Heart right ventricle (tissue), 16 donors: ENCODE measurements at regions of chr5 and their contacts with region 1.

Region 1: DNA sequence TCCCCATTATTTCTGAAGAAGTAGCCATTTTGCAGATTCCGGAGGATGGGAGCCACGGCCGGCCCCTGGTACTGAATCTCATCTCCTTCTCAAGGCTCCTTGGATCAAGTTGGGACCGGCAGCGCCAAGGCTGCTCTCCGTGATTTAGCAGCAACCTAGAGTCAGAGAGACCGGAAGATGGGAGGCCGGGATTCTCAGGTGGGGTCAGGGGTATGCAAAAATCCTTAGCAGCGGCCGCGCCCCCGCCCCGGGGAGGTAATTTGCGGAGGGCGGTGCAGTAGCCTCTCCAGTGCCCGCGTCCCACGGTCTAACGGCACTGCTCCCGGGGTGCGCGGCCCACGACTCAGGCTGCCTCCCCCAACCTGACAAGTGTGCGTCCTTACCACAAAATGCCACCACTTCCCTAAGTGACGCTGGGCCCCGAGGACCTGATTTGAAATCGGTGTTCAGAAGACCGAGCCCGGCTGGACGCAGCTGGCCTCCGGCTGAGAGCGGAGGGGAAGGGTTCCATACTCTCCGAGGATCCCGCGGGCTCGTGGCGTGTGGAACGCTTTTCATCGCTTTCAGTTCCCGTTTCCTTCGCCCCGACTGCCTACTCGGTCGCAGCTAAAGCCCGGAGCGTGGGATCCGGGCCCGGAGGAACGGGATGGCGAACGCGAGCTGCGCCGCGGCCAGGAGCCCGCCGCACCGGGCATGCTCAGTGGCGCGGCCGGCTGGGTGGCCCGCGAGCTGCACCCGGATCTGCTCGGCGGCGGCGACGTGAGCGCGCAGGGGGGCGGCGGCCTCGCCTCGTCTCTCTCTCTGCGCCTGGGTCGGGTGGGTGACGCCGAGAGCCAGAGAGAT is at the start of gene SCAMP1:
- DNase-seq: peak; percentile 91 to 95
- ATAC-seq: peak; percentile 97 to 99 (median 98)
- H3K4me3 ChIP-seq: peak within 1 kb of the TSS; percentile 66 to 100 (median 95)
- H3K27ac ChIP-seq: peak within 1 kb of the TSS; percentile 68 to 97 (median 91)
- H3K4me1 ChIP-seq: peaks cover 3 to 32% (median 24%) of the 10 kb centered on the region in 9 donors
- H3K27me3 ChIP-seq: no peaks in the 10 kb centered on the region
- CTCF ChIP-seq: peak; percentile 25 to 70 (median 57)
- total RNA-seq, gene SCAMP1: 26.2 to 40.4 (median 33.8) TPM

Region 2: DNA sequence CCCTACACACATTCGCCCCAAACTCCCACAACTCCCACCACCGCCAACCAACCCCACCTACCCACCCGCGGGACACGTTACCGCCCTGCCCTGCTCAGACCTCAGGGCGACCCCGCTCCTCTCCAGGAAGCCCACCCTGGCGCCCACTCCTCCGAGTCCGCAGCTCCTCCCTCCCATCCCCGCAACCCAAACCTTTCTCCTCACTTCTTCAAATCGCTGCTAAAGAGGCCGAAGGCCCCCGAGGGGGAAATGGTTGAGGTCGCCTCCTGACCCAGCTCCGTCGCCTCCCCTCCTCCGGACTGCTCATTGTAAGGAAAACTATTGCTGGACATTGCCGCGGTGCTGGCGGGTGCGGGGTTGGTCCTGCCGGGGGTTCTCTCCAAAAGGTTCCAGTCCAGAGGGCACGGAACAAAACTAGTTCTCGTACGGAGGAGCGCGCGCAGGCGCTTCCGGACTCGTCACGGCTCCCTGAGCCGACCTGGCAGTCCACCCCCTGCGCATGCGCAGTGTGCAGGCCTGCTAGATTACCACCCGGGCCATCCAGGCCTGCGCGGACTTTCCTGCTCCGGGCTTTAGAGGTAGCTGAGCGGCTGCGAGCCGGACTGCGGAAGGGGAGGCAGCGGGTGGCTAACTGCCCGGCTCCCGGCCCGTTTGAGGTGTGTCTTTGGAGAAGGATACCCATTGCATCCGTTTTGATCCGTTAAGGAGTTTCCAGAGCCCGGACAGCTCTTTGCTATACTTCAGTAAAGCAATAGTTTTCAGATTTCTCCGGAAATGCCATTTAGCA is 65.6 kb before region 1 on chr5 and contains the start of gene AP3B1:
- intact Hi-C with region 1: loop called in 9 of 10 experiments (anchors 1 to 5 kb)
- DNase-seq: peak; percentile 98 to 100
- ATAC-seq: peak; percentile 97 to 99 (median 98)
- H3K4me3 ChIP-seq: peak within 1 kb of the TSS; percentile 58 to 97 (median 82)
- H3K27ac ChIP-seq: peak within 1 kb of the TSS; percentile 36 to 94 (median 88)
- H3K4me1 ChIP-seq: peaks cover 2 to 45% (median 27%) of the 10 kb centered on the region in 9 donors
- H3K27me3 ChIP-seq: no peaks in the 10 kb centered on the region
- CTCF ChIP-seq: no peak
- total RNA-seq, gene AP3B1: 20.1 to 26.7 (median 23.4) TPM

Region 3: DNA sequence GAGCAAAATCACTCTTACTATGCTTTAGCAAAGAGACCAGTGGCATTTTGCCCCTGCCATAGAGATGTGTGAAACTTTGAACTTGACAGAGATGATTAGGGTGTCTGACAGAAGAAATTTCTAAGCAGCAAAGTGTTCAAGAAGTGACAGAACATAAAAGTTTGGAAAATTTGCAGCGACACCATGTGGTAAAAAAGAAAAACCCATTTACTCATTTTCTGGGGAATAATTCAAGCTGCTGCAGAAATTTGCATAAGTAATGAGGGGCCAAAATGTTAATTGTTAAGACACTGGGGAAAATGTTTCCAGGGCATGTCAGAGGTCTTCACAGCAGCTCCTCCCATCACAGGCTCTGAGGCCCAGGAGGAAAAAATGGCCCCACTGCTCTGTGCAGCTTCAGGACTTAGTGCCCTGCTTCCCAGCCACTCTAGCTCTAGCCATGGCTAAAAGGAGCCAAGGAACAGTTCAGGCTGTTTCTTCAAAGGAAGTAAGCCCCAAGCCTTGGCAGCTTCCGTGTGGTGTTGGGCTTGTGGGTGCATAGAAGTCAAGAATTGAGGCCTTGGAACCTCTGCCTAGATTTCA is 59.5 kb before region 1 on chr5:
- intact Hi-C with region 1: loop called in 3 of 10 experiments (anchors 2 to 5 kb)
- DNase-seq: no peak
- ATAC-seq: no peak
- H3K4me3 ChIP-seq: no peak overlapping the region
- H3K27ac ChIP-seq: no peak overlapping the region
- H3K4me1 ChIP-seq: peaks cover 2 to 5% (median 3%) of the 10 kb centered on the region in 9 donors
- H3K27me3 ChIP-seq: no peaks in the 10 kb centered on the region
- CTCF ChIP-seq: peak in 7 of 9 donors; percentile 24 to 54 (median 38)

Region 4: DNA sequence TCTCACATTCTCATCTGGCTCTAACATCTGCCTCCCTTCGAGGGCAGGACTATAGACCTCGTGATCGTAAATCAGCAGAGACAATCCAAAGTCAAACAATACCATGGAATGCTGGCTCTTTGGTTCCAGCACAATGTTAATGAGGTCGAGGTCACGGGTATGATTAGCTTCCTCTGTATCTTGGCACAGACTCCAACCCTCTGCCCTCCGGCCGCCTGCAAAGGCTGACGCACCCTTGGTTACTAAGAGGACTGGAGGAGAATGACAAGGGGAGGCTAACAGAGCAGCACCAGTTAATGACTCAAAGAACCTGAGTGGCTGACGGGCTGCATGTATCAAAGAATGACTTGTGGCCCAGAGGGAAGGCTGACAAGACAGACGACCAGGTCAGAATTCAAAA is 278.4 kb after region 1 on chr5:
- intact Hi-C with region 1: loop called in 1 of 10 experiments (anchors 10 kb)
- DNase-seq: peak; percentile 53 to 76
- ATAC-seq: peak; percentile 88 to 97 (median 94)
- H3K4me3 ChIP-seq: peak overlapping the region in 1 of 10 donors; percentile 1
- H3K27ac ChIP-seq: peak overlapping the region in 8 of 10 donors; percentile 17 to 67 (median 52)
- H3K4me1 ChIP-seq: peaks cover 11 to 70% (median 52%) of the 10 kb centered on the region in 9 donors
- H3K27me3 ChIP-seq: no peaks in the 10 kb centered on the region
- CTCF ChIP-seq: no peak